ENCODE measurements at regions of chr9 and their contacts with region 1.

Region 1: GRCh38 chr9:26955921-26956859 is at the start of gene IFT74:
- DNase-seq: peak; percentile 93
- ATAC-seq: peak; percentile 100
- H3K4me3 ChIP-seq: peak within 1 kb of the TSS; percentile 80
- H3K27ac ChIP-seq: peak within 1 kb of the TSS; percentile 19; the same call in 1 of the 2 replicates
- H3K4me1 ChIP-seq: peaks cover 14% of the 10 kb centered on the region
- H3K27me3 ChIP-seq: no peaks in the 10 kb centered on the region
- CTCF ChIP-seq: no peak
- total RNA-seq, gene IFT74: 5.5 and 6.2 TPM in 2 replicates

Region 2: DNA sequence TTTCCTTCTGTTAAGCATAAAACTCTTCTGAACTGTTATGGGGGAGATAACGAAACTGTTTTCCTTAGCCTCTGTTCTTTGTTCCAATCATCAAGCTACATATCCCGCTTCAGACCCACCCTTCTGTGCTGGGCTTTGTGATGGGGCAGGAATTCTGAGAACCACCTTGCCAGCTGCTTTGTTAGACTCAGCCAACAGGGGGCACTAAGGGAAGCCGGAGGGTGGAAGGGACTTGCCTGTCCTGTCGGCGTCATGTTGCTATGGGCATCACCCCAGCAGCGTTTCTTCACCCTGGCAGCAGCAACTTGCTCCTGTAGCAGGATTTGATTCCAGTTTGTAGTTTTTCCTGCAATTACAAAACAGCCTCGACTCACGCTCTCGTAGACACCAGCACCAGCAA is 232.7 kb before region 1 on chr9:
- CTCF ChIA-PET with region 1: interaction called, 10 read pairs
- POLR2A ChIA-PET with region 1: no interaction called
- intact Hi-C with region 1: no loop called
- DNase-seq: peak; percentile 57
- ATAC-seq: peak; percentile 54
- H3K4me3 ChIP-seq: no peak overlapping the region
- H3K27ac ChIP-seq: no peak overlapping the region
- H3K4me1 ChIP-seq: no peaks in the 10 kb centered on the region
- H3K27me3 ChIP-seq: peaks cover 33% of the 10 kb centered on the region
- CTCF ChIP-seq: peak; percentile 62

Region 3: DNA sequence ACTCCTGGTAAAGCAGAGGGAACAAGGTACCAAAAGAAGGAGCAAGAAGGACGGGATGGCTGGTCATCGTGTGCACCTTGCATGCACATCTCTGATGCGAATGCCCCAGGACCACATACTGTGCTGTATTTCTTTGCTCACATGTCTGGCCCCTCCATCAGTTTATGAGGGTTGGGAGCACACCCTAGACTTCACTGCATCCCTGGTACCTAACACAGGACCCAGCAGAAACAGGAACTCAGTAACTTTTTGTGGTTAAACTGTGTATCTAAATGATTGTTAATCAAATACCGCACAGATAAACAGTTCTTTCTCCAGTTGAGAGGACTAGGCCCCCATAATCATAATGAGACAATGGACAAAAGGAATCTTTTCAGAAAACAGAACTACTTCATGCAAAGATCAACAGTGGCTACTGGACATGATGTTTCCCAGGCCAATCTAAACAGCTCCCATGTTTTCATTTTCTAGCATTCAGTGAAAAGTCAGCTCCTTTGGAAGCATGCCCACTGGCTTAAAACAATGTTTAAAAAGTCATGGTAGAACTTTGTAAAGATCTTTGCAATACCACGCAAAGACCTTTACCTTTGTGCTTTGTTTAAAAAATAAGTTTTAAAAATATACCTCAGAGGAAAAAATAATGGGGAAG is 512.4 kb after region 1 on chr9:
- CTCF ChIA-PET with region 1: no interaction called
- POLR2A ChIA-PET with region 1: no interaction called
- intact Hi-C with region 1: no loop called
- DNase-seq: no peak
- ATAC-seq: no peak
- H3K4me3 ChIP-seq: no peak overlapping the region
- H3K27ac ChIP-seq: no peak overlapping the region
- H3K4me1 ChIP-seq: no peaks in the 10 kb centered on the region; the same call in 1 of the 2 replicates
- H3K27me3 ChIP-seq: no peaks in the 10 kb centered on the region
- CTCF ChIP-seq: no peak

Measured in PC-3 (cell line).